ENCODE measurements at regions of chr5 and their contacts with region 1.

Region 1: GRCh38 chr5:19638461-19638860 is 349.5 kb downstream of the CDH18 start:
- DNase-seq: no peak
- ATAC-seq: no peak
- H3K4me3 ChIP-seq: no peak overlapping the region
- H3K27ac ChIP-seq: no peak overlapping the region
- H3K4me1 ChIP-seq: no peaks in the 10 kb centered on the region
- H3K27me3 ChIP-seq: no peaks in the 10 kb centered on the region
- CTCF ChIP-seq: no peak

Region 2: DNA sequence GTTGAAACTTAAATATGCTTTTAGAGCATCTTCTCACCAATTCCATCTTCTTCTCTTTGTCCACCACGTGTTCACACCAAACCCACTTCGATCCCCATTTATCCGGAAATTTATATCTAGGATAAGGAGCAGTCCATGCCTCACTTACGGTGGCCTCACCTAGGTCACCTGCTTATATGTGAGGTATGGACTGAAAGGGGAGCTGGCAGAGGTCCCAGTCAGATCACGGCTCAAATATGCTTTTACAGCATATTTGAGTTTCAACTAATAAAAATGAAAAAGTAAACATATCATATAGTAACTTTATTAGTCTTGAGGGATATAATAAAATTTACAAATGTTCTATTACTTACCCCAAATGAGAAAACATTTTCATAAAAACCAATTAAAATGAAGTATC is 158.9 kb before region 1 on chr5:
- CTCF ChIA-PET with region 1: no interaction called
- POLR2A ChIA-PET with region 1: no interaction called
- in situ Hi-C with region 1: no loop called
- intact Hi-C with region 1: no loop called
- DNase-seq: no peak
- ATAC-seq: no peak
- H3K4me3 ChIP-seq: no peak overlapping the region
- H3K27ac ChIP-seq: no peak overlapping the region
- H3K4me1 ChIP-seq: no peaks in the 10 kb centered on the region
- H3K27me3 ChIP-seq: no peaks in the 10 kb centered on the region
- CTCF ChIP-seq: no peak

Region 3: GRCh38 chr5:19660679-19661078 is 22.2 kb after region 1 on chr5:
- CTCF ChIA-PET with region 1: no interaction called
- POLR2A ChIA-PET with region 1: no interaction called
- in situ Hi-C with region 1: no loop called
- intact Hi-C with region 1: no loop called
- DNase-seq: no peak
- ATAC-seq: no peak
- H3K4me3 ChIP-seq: no peak overlapping the region
- H3K27ac ChIP-seq: no peak overlapping the region
- H3K4me1 ChIP-seq: no peaks in the 10 kb centered on the region
- H3K27me3 ChIP-seq: no peaks in the 10 kb centered on the region
- CTCF ChIP-seq: no peak

Region 4: GRCh38 chr5:20109320-20109719 is 470.9 kb after region 1 on chr5:
- CTCF ChIA-PET with region 1: no interaction called
- POLR2A ChIA-PET with region 1: interaction called, 15 read pairs
- in situ Hi-C with region 1: no loop called
- intact Hi-C with region 1: no loop called
- DNase-seq: no peak
- ATAC-seq: no peak
- H3K4me3 ChIP-seq: no peak overlapping the region
- H3K27ac ChIP-seq: peak overlapping the region; percentile 37
- H3K4me1 ChIP-seq: no peaks in the 10 kb centered on the region; the same call in 1 of the 2 replicates
- H3K27me3 ChIP-seq: no peaks in the 10 kb centered on the region
- CTCF ChIP-seq: no peak